Activated CD4-positive, alpha-beta memory T cell treated with anti-CD3 and anti-CD28 coated beads for 36 hours (primary cell): ENCODE measurements at regions of chr2 and their contacts with region 1.

Region 1: GRCh38 chr2:177724398-177725287 is 332.1 kb downstream of the AGPS start:
- DNase-seq: peak; percentile 63
- H3K4me3 Mint-ChIP-seq: no peak overlapping the region
- H3K27ac Mint-ChIP-seq: no peak overlapping the region
- H3K4me1 Mint-ChIP-seq: no peaks in the 10 kb centered on the region
- H3K27me3 Mint-ChIP-seq: peaks cover 16% of the 10 kb centered on the region

Region 2: GRCh38 chr2:177489719-177490301 is 234.8 kb before region 1 on chr2:
- CTCF ChIA-PET with region 1: interaction called, 4 read pairs
- POLR2A ChIA-PET with region 1: no interaction called
- intact Hi-C with region 1: loop called (anchors 10 kb)
- DNase-seq: no peak
- H3K4me3 Mint-ChIP-seq: no peak overlapping the region
- H3K27ac Mint-ChIP-seq: no peak overlapping the region
- H3K4me1 Mint-ChIP-seq: no peaks in the 10 kb centered on the region
- H3K27me3 Mint-ChIP-seq: no peaks in the 10 kb centered on the region

Region 3: GRCh38 chr2:177842243-177842642 is 117.6 kb after region 1 on chr2:
- CTCF ChIA-PET with region 1: no interaction called
- POLR2A ChIA-PET with region 1: no interaction called
- intact Hi-C with region 1: no loop called
- DNase-seq: no peak
- H3K4me3 Mint-ChIP-seq: no peak overlapping the region
- H3K27ac Mint-ChIP-seq: no peak overlapping the region
- H3K4me1 Mint-ChIP-seq: no peaks in the 10 kb centered on the region
- H3K27me3 Mint-ChIP-seq: peaks cover 4% of the 10 kb centered on the region